Activated CD4-positive, alpha-beta T cell treated with anti-CD3 and anti-CD28 coated beads for 36 hours (primary cell): ENCODE measurements at regions of chr3 and their contacts with region 1.

Region 1: DNA sequence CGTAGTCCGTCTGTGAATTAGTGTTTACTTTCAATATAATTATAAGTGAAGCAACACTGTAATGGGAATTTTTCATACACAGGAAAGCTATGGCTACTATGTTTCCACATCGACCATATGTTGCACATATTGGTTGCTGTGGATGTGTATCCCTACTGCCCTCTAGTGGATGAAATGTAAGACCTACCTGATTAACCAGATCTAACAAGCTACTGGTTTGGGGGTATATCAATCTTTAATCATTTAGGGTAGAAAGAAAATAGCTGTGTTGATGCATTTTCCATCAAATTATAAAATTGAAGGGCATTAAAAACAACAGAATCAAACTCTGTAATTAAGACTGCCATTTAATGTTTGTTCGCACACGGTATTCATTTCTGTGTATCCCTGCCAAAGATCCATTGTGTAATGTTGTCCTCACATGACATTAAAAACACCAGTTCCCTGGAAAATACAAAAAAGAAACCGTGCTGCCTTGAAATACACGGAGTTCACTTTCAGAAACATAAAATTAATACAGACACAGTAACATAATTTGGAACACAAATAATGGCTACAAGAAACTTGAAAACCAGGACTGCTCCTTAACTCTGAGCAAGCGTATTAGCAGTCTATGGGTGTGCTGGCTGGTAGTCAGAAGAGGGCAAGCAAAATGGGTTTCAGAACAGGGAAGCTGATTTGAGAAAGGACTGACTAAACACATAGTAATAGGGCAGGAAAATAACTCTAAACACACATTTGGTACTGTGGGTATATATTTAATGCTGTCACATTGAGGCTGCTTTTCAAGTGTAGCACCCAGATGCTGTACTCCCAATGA is 125.1 kb downstream of the TIGIT start:
- DNase-seq: no peak
- ATAC-seq: peak; percentile 70
- H3K4me3 Mint-ChIP-seq: peak overlapping the region; percentile 29
- H3K27ac Mint-ChIP-seq: peak overlapping the region; percentile 79
- H3K4me1 Mint-ChIP-seq: peaks cover 35% of the 10 kb centered on the region
- H3K27me3 Mint-ChIP-seq: no peaks in the 10 kb centered on the region

Region 2: GRCh38 chr3:114152519-114153151 is 266.3 kb before region 1 on chr3:
- CTCF ChIA-PET with region 1: interaction called, 6 read pairs
- POLR2A ChIA-PET with region 1: no interaction called
- intact Hi-C with region 1: loop called (anchors 1 kb)
- DNase-seq: peak; percentile 91
- ATAC-seq: peak; percentile 92
- H3K4me3 Mint-ChIP-seq: peak overlapping the region; percentile 15
- H3K27ac Mint-ChIP-seq: no peak overlapping the region
- H3K4me1 Mint-ChIP-seq: peaks cover 11% of the 10 kb centered on the region
- H3K27me3 Mint-ChIP-seq: no peaks in the 10 kb centered on the region

Region 3: GRCh38 chr3:114308830-114309229 is 110.1 kb before region 1 on chr3:
- CTCF ChIA-PET with region 1: interaction called, 3 read pairs
- POLR2A ChIA-PET with region 1: interaction called, 3 read pairs
- intact Hi-C with region 1: loop called in 1 of 2 experiments (anchors 5 kb)
- DNase-seq: peak; percentile 69
- ATAC-seq: peak; percentile 75
- H3K4me3 Mint-ChIP-seq: peak overlapping the region; percentile 40
- H3K27ac Mint-ChIP-seq: peak overlapping the region; percentile 95
- H3K4me1 Mint-ChIP-seq: peaks cover 56% of the 10 kb centered on the region
- H3K27me3 Mint-ChIP-seq: no peaks in the 10 kb centered on the region

Region 4: GRCh38 chr3:114356525-114356924 is 62.4 kb before region 1 on chr3:
- CTCF ChIA-PET with region 1: no interaction called
- POLR2A ChIA-PET with region 1: no interaction called
- intact Hi-C with region 1: no loop called
- DNase-seq: no peak
- ATAC-seq: peak; percentile 36
- H3K4me3 Mint-ChIP-seq: no peak overlapping the region
- H3K27ac Mint-ChIP-seq: no peak overlapping the region
- H3K4me1 Mint-ChIP-seq: peaks cover 5% of the 10 kb centered on the region
- H3K27me3 Mint-ChIP-seq: no peaks in the 10 kb centered on the region

Region 5: DNA sequence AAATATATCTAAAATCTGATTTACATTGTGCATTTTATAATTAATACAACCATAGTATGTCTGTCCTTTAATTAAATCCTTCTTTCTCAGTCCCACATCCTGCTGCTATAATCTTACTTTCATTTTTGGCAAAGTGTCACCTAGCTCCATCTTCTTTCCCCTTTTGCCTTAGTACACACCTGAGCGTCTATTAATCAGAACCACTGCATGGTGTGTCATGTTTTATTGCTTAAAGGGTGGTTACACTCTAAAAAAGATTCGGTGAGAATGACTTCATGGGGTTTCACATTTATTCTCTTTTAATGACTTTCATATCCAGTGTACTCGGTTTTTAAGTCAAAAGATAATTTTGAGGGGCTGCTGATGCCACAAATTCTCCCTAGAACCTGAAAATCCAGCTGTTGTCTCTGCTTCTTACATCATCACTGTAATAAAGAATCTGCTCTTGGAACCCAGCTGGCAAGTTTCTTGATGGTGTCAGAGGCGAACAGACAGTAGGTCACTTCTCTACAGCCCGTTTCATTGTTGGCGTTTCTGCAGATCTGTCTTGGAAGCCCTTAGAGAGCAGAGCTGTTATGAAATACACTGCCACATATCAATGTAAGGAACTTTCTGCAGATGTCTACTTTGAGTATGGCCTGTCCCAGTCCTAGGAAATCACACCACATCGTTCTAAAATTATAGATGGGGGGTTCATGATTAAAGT is 25.4 kb before region 1 on chr3:
- CTCF ChIA-PET with region 1: interaction called, 15 read pairs
- POLR2A ChIA-PET with region 1: no interaction called
- intact Hi-C with region 1: no loop called
- DNase-seq: no peak
- ATAC-seq: peak; percentile 79
- H3K4me3 Mint-ChIP-seq: no peak overlapping the region
- H3K27ac Mint-ChIP-seq: no peak overlapping the region
- H3K4me1 Mint-ChIP-seq: peaks cover 36% of the 10 kb centered on the region
- H3K27me3 Mint-ChIP-seq: no peaks in the 10 kb centered on the region

Region 6: GRCh38 chr3:114499976-114500375 is 81.0 kb after region 1 on chr3:
- CTCF ChIA-PET with region 1: interaction called, 3 read pairs
- POLR2A ChIA-PET with region 1: no interaction called
- intact Hi-C with region 1: loop called in 1 of 2 experiments (anchors 1 kb)
- DNase-seq: no peak
- ATAC-seq: peak; percentile 84
- H3K4me3 Mint-ChIP-seq: no peak overlapping the region
- H3K27ac Mint-ChIP-seq: no peak overlapping the region
- H3K4me1 Mint-ChIP-seq: peaks cover 34% of the 10 kb centered on the region
- H3K27me3 Mint-ChIP-seq: peaks cover 11% of the 10 kb centered on the region

Region 7: GRCh38 chr3:114632757-114633424 is 214.0 kb after region 1 on chr3:
- CTCF ChIA-PET with region 1: no interaction called
- POLR2A ChIA-PET with region 1: no interaction called
- intact Hi-C with region 1: loop called in 1 of 2 experiments (anchors 1 kb)
- DNase-seq: peak; percentile 63
- ATAC-seq: peak; percentile 93
- H3K4me3 Mint-ChIP-seq: no peak overlapping the region
- H3K27ac Mint-ChIP-seq: peak overlapping the region; percentile 27
- H3K4me1 Mint-ChIP-seq: peaks cover 19% of the 10 kb centered on the region
- H3K27me3 Mint-ChIP-seq: no peaks in the 10 kb centered on the region